GM12878 (cell line): ENCODE measurements at regions of chr15 and their contacts with region 1.

Region 1: DNA sequence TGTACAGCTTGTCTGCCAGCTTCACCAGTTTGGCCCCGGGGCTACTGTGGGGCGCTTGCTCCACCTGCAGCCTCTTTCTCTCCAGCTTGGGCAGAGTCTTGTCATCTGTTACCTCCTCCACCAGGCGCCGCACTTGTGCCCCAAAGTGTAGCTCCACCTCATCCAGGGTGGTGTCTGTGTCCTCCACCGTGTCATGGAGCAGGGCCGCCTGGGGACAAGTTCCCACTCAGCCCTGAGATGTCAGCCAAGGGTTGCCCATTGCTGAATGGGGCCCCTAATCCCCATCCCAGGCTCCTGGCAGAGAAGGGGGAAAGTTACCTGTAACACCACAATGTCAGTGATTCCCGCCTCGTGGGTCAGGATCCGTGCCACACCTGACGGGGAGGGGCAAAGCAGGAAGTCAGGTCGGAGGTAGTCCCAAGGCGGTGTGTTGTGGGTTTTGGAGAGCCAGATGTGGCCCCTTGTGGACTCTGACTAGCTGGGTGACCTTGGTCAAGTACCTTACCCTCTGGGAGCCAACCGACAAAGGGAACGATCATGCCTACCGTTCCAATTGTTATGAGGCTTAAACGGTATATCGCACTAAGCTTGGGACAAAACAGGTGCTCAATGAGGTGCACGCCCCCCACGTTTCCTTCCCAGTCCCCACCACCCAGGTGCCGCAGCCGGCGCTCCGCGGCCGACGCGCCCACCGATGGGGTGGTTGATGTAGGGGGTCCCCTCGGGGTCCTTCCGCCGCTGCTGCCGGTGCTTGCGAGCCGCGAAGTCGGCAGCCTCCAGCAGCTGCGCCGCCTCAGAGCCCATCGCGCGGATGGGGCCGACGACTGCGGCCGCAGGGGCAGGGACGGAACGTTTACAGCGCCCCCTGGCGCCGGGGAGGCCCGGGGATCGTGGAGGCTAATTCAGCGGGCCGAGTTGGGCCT is at the start of gene HDDC3:
- DNase-seq: peak; percentile 63
- ATAC-seq: peak; percentile 74
- H3K4me3 ChIP-seq: peak within 1 kb of the TSS; percentile 90
- H3K27ac ChIP-seq: peak within 1 kb of the TSS; percentile 85
- H3K4me1 ChIP-seq: peaks cover 35% of the 10 kb centered on the region
- H3K27me3 ChIP-seq: no peaks in the 10 kb centered on the region
- CTCF ChIP-seq: peak; percentile 91 to 98 (median 92)
- EP300 ChIP-seq: no peak
- POLR2A ChIP-seq: peak; percentile 86
- RAD21 ChIP-seq: peak; percentile 54; the same call in 1 of the 2 replicates
- polyA plus RNA-seq, gene HDDC3: 5.6 to 9.0 TPM

Region 2: GRCh38 chr15:90334304-90334731 is 597.7 kb before region 1 on chr15:
- CTCF ChIA-PET with region 1: no interaction called
- POLR2A ChIA-PET with region 1: no interaction called
- RAD21 ChIA-PET with region 1: no interaction called
- SMC1A ChIA-PET with region 1: no interaction called
- in situ Hi-C with region 1: no loop called
- intact Hi-C with region 1: no loop called
- DNase-seq: no peak
- ATAC-seq: no peak
- H3K4me3 ChIP-seq: no peak overlapping the region
- H3K27ac ChIP-seq: no peak overlapping the region
- H3K4me1 ChIP-seq: peaks cover 5% of the 10 kb centered on the region; the same call in 1 of the 2 replicates
- H3K27me3 ChIP-seq: no peaks in the 10 kb centered on the region
- CTCF ChIP-seq: no peak
- EP300 ChIP-seq: no peak
- POLR2A ChIP-seq: no peak
- RAD21 ChIP-seq: no peak

Region 3: DNA sequence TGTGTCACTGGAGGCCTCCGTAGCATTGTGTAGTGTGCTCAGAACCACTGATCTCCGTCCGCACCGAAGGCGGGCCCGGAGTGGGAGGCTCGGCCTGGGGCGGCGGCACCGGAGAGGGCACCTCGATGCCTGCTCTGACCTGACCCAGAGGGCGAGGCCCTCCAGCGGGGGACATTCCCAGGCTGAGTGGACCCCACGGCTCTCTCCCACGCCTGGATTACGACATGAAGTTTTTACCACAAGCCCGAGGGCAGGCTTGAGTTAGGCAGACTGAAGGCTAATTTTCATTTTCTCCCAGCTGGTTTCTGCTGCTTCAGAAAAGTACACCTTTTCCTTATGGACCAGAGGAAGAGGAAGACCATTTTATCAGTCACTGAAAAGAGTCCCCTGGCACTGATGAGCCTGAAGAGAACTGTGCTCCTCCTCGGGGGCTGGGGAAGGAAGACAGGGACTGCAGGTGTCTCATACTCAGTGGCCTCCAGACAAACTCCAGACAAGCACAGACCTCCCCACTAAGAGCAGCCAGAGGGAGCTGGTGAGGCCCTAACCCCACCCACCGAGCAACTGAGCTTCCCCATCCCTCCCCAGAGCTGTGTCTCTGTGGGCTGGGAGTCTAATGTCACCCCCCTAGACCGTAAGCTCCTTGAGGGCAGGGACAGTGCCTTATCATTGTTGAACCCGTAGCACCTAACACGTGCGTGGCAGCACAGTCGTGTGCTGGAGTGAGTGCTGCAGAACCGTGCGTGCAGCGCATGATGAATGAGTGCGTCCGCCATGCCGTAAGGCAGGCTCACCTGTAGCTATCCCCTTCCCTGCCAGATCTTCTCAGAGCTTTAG is 289.3 kb before region 1 on chr15:
- CTCF ChIA-PET with region 1: interaction called, 47 read pairs
- POLR2A ChIA-PET with region 1: interaction called, 6 read pairs
- RAD21 ChIA-PET with region 1: interaction called, 47 read pairs
- SMC1A ChIA-PET with region 1: interaction called, 18 read pairs
- in situ Hi-C with region 1: no loop called
- intact Hi-C with region 1: loop called (anchors 5 kb)
- DNase-seq: no peak
- ATAC-seq: peak; percentile 25; the same call in 1 of the 3 replicates
- H3K4me3 ChIP-seq: no peak overlapping the region
- H3K27ac ChIP-seq: no peak overlapping the region
- H3K4me1 ChIP-seq: peaks cover 2% of the 10 kb centered on the region
- H3K27me3 ChIP-seq: no peaks in the 10 kb centered on the region
- CTCF ChIP-seq: peak in 2 of 3 experiments; percentile 5 to 14; a peak in 1 of 6 replicates
- EP300 ChIP-seq: no peak
- POLR2A ChIP-seq: peak; percentile 54
- RAD21 ChIP-seq: no peak

Region 4: GRCh38 chr15:90716976-90717821 is 214.8 kb before region 1 on chr15 and contains the start of gene BLM:
- CTCF ChIA-PET with region 1: interaction called, 14 read pairs
- POLR2A ChIA-PET with region 1: interaction called, 7 read pairs
- RAD21 ChIA-PET with region 1: interaction called, 9 read pairs
- SMC1A ChIA-PET with region 1: interaction called, 5 read pairs
- in situ Hi-C with region 1: no loop called
- intact Hi-C with region 1: loop called (anchors 5 kb)
- DNase-seq: peak; percentile 93
- ATAC-seq: peak; percentile 99
- H3K4me3 ChIP-seq: peak within 1 kb of the TSS; percentile 91
- H3K27ac ChIP-seq: peak within 1 kb of the TSS; percentile 94
- H3K4me1 ChIP-seq: peaks cover 15% of the 10 kb centered on the region
- H3K27me3 ChIP-seq: no peaks in the 10 kb centered on the region
- CTCF ChIP-seq: peak in 1 of 3 experiments; percentile 22; a peak in 1 of 6 replicates
- EP300 ChIP-seq: no peak
- POLR2A ChIP-seq: peak; percentile 85
- RAD21 ChIP-seq: no peak
- polyA plus RNA-seq, gene BLM: 25.3 to 28.2 TPM

Region 5: DNA sequence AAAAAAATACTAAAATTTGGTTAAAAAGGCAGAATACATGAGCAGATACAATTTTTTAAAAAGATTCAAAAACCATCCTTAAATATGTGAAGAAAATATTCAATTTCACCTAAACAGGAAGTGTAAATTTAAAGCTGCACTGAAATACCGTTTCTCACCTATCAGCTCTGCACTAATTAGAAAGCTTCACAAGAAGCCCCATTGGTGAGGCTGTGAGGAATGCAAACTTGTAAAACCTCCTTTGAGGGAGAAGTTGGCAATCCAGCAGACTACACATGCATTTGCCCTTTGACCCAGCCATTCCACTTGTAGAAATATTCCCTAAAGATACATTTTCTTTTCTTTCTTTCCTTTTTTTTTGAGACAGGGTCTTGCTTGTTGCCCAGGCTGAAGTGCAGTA is 196.1 kb before region 1 on chr15:
- CTCF ChIA-PET with region 1: no interaction called
- POLR2A ChIA-PET with region 1: no interaction called
- RAD21 ChIA-PET with region 1: no interaction called
- SMC1A ChIA-PET with region 1: no interaction called
- in situ Hi-C with region 1: no loop called
- intact Hi-C with region 1: no loop called
- DNase-seq: no peak
- ATAC-seq: peak; percentile 55
- H3K4me3 ChIP-seq: no peak overlapping the region
- H3K27ac ChIP-seq: no peak overlapping the region; the same call in 1 of the 2 replicates
- H3K4me1 ChIP-seq: no peaks in the 10 kb centered on the region
- H3K27me3 ChIP-seq: no peaks in the 10 kb centered on the region
- CTCF ChIP-seq: no peak
- EP300 ChIP-seq: no peak
- POLR2A ChIP-seq: no peak
- RAD21 ChIP-seq: no peak

Region 6: DNA sequence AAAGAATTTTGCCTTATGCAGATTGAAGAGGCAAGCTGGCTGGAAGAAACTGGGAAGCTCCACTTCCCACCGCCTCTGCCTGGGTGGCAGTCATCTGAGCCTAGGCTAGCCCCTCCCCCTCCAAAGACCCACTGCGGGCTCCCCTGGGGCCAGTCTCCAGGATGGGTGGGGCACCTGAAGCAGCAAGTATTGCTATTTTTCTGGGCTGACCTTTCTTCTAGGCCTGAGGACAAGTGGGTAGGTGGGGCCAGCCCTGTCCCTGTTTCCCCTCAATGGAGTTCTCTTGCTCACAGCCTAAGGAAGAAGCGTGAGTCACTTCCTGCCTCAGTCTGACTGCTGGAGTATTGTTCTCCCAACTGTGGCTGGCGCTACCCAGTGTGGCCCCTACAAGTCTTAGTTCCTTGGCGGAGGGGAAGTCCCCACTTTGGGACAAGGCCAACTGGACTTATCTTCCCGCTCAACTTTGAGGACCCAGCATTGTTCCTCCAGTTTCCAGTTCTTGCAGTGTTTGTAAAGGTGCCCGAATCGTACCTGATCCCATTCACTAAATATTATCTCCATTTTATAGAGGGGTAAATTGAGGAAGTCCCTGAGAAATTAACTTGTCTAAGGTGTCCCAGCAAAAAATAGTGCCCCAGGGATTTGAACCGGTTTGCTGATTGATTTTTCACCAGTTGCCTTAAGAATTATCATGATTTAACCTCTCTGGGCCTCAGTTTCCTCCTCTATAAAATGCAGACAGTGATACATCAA is 62.2 kb before region 1 on chr15:
- CTCF ChIA-PET with region 1: interaction called, 10 read pairs
- POLR2A ChIA-PET with region 1: interaction called, 7 read pairs
- RAD21 ChIA-PET with region 1: interaction called, 7 read pairs
- SMC1A ChIA-PET with region 1: no interaction called
- in situ Hi-C with region 1: no loop called
- intact Hi-C with region 1: no loop called
- DNase-seq: no peak
- ATAC-seq: peak; percentile 20
- H3K4me3 ChIP-seq: peak overlapping the region; percentile 94; the same call in 1 of the 2 replicates
- H3K27ac ChIP-seq: no peak overlapping the region
- H3K4me1 ChIP-seq: peaks cover 28% of the 10 kb centered on the region
- H3K27me3 ChIP-seq: no peaks in the 10 kb centered on the region
- CTCF ChIP-seq: no peak
- EP300 ChIP-seq: no peak
- POLR2A ChIP-seq: no peak
- RAD21 ChIP-seq: no peak

Region 7: DNA sequence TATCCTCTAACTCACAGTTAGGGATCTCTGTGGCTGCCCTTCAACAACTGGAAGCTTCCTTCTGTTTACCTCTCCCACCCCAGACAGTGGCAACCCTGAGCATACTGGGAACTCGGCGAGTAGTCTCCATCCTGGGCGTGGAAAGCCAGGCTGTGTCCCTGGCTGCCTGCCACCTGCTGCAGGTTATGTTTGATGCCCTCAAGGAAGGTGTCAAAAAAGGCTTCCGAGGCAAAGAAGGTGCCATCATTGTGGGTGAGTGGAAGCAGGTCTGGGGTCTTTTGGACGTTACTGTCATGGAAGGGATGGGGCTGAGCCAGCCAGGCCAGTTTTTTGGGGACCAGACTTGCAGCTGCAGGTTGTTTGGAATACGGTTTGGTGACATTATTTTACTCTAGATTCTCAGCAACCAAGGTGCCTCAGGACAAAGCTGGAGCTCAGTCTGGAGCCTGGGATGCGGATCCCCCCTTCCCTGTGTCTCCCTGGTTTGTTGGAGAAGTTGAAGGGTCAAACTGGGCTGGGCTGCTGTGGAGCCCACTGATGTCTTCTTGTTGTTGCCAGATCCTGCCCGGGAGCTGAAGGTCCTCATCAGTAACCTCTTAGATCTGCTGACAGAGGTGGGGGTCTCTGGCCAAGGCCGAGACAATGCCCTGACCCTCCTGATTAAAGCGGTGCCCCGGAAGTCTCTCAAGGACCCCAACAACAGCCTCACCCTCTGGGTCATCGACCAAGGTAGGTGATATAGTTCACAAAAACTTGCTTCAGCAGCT is 10.5 kb after region 1 on chr15:
- CTCF ChIA-PET with region 1: interaction called, 16 read pairs
- POLR2A ChIA-PET with region 1: interaction called, 4 read pairs
- RAD21 ChIA-PET with region 1: interaction called, 3 read pairs
- SMC1A ChIA-PET with region 1: no interaction called
- in situ Hi-C with region 1: no loop called
- intact Hi-C with region 1: no loop called
- DNase-seq: no peak
- ATAC-seq: no peak
- H3K4me3 ChIP-seq: no peak overlapping the region
- H3K27ac ChIP-seq: no peak overlapping the region
- H3K4me1 ChIP-seq: no peaks in the 10 kb centered on the region
- H3K27me3 ChIP-seq: no peaks in the 10 kb centered on the region
- CTCF ChIP-seq: no peak
- EP300 ChIP-seq: no peak
- POLR2A ChIP-seq: no peak
- RAD21 ChIP-seq: no peak

Region 8: GRCh38 chr15:91049378-91050127 is 117.6 kb after region 1 on chr15:
- CTCF ChIA-PET with region 1: interaction called, 11 read pairs
- POLR2A ChIA-PET with region 1: interaction called, 4 read pairs
- RAD21 ChIA-PET with region 1: interaction called, 16 read pairs
- SMC1A ChIA-PET with region 1: interaction called, 4 read pairs
- in situ Hi-C with region 1: no loop called
- intact Hi-C with region 1: no loop called
- DNase-seq: peak; percentile 12
- ATAC-seq: peak; percentile 96
- H3K4me3 ChIP-seq: no peak overlapping the region
- H3K27ac ChIP-seq: no peak overlapping the region
- H3K4me1 ChIP-seq: no peaks in the 10 kb centered on the region; the same call in 1 of the 2 replicates
- H3K27me3 ChIP-seq: no peaks in the 10 kb centered on the region; a peak in 2 of 4 replicates
- CTCF ChIP-seq: peak; percentile 68 to 72 (median 69)
- EP300 ChIP-seq: no peak
- POLR2A ChIP-seq: no peak
- RAD21 ChIP-seq: peak; percentile 77

Region 9: DNA sequence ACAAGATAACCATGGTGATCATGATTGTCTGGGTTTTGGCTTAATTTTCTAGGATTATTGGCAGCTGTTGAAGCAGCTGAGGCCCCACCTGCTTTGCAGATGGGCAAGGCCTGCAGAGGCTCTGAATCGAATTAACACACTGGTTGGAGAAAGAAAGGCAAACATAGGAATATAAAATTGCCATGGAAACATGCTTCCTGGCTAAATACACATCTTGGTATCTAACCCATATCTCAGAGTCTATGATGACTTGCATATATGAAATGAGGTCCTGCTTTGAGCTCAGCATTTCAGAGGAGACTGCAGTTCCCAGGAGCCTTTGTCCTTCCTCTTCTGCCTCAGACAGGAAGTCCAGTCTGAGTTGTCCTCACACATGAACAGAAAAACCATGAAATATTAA is 143.7 kb after region 1 on chr15:
- CTCF ChIA-PET with region 1: no interaction called
- POLR2A ChIA-PET with region 1: no interaction called
- RAD21 ChIA-PET with region 1: no interaction called
- SMC1A ChIA-PET with region 1: no interaction called
- in situ Hi-C with region 1: no loop called
- intact Hi-C with region 1: no loop called
- DNase-seq: no peak
- ATAC-seq: no peak
- H3K4me3 ChIP-seq: no peak overlapping the region
- H3K27ac ChIP-seq: no peak overlapping the region
- H3K4me1 ChIP-seq: no peaks in the 10 kb centered on the region
- H3K27me3 ChIP-seq: no peaks in the 10 kb centered on the region
- CTCF ChIP-seq: no peak
- EP300 ChIP-seq: no peak
- POLR2A ChIP-seq: no peak
- RAD21 ChIP-seq: no peak